Activated CD4-positive, alpha-beta memory T cell treated with anti-CD3 and anti-CD28 coated beads for 36 hours (primary cell): ENCODE measurements at regions of chr7 and their contacts with region 1.

Region 1: GRCh38 chr7:33757562-33758165 is 147.7 kb upstream of the BMPER start:
- DNase-seq: no peak
- H3K4me3 Mint-ChIP-seq: no peak overlapping the region
- H3K27ac Mint-ChIP-seq: no peak overlapping the region
- H3K4me1 Mint-ChIP-seq: no peaks in the 10 kb centered on the region
- H3K27me3 Mint-ChIP-seq: peaks cover 1% of the 10 kb centered on the region

Region 2: DNA sequence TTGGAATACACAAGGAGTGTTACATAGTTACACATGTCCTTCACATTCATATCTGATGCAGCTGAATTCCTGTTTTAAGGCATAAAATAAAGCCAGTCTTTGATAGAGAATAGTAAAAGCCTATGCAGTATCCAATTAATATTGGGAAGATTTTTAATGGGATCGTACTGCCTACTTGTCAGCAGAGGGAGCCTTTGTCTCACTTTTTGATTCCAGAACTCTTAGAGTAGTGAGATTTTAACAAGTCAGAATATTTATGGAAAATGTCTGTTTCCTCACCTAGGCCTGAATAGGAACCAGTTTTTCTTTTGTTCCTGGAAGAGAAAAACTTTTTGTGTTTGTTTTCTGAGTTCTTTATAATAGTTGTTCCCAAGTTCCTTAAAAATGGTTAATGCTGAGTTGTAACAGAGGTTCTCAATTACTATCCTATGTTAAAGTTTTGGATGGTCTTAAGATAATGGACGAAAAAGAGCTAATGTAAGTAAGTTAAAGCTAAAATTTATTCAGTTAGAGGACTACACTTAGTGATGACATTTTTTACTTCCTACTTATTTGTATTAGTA is 514.3 kb before region 1 on chr7:
- CTCF ChIA-PET with region 1: no interaction called
- POLR2A ChIA-PET with region 1: no interaction called
- intact Hi-C with region 1: loop called (anchors 10 kb)
- DNase-seq: no peak
- H3K4me3 Mint-ChIP-seq: no peak overlapping the region
- H3K27ac Mint-ChIP-seq: no peak overlapping the region
- H3K4me1 Mint-ChIP-seq: no peaks in the 10 kb centered on the region
- H3K27me3 Mint-ChIP-seq: no peaks in the 10 kb centered on the region

Region 3: DNA sequence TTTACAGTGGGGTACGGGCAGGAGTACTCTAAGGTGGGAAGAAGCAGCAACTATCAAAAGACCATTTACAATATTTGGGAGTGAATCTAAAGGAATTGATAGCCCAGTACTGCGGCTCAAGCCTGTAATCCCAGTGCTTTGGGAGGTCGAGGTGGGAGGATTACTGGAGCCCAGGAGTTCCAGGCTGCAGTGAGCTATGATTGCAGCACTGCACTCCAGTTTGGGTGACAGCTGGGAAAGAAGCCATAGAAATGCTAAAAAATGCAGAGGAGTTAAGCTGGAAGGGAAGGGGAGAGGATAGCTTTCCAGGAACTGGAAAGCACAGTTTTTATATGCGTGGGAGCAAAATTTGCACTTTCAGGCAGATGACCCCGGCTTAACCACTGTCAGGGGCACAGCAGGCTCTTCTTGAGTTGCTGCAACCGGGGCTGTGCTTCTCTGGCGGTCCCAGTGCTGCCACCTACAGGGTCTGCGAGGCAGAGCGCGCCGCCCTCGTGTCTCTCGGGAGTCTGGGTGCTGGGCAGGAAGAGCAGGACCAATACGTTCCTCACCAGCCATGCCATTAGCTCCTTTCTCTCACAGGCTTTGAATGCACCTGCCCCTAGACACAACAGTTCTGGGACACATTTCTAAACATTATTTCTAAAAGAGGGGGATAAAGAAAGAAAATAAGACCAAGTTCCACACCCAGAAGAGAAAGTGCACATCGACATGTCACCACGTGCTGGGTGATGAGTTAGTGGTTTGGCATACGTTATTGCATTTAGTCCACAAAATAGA is 137.6 kb after region 1 on chr7:
- CTCF ChIA-PET with region 1: interaction called, 30 read pairs
- POLR2A ChIA-PET with region 1: no interaction called
- intact Hi-C with region 1: loop called (anchors 2 kb)
- DNase-seq: peak; percentile 82
- H3K4me3 Mint-ChIP-seq: no peak overlapping the region
- H3K27ac Mint-ChIP-seq: no peak overlapping the region
- H3K4me1 Mint-ChIP-seq: peaks cover 3% of the 10 kb centered on the region
- H3K27me3 Mint-ChIP-seq: peaks cover 32% of the 10 kb centered on the region